Adrenal gland (tissue), 19 donors: ENCODE measurements at regions of chr5 and their contacts with region 1.

Region 1: GRCh38 chr5:41863871-41864486 is 6.2 kb downstream of the OXCT1 start:
- DNase-seq: no peak
- H3K4me3 ChIP-seq: no peak overlapping the region
- H3K27ac ChIP-seq: no peak overlapping the region
- H3K4me1 ChIP-seq: peaks cover 0 to 4% of the 10 kb centered on the region in 2 donors
- H3K27me3 ChIP-seq: no peaks in the 10 kb centered on the region
- CTCF ChIP-seq: no peak
- POLR2A ChIP-seq: no peak

Region 2: DNA sequence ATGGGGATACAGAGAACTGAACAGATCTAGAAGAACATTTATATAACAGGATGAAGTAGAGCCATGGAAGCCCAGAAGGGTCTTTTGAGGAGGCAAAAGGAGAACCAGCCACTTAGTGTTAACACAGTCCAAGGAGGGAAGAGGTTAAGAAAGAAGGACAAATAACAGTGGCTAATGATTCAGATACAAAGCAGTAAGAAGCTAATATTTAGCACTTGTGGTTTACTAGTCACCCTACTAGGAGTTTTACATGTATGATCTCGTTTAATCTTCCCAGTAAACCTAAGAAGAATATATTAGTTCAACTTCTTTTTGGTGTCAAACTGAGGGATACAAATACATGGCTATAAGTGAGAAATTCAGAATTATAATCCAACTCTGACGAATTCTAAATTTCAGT is 68.8 kb after region 1 on chr5:
- intact Hi-C with region 1: loop called in 1 of 2 experiments (anchors 5 kb)
- DNase-seq: no peak
- H3K4me3 ChIP-seq: no peak overlapping the region
- H3K27ac ChIP-seq: no peak overlapping the region
- H3K4me1 ChIP-seq: no peaks in the 10 kb centered on the region
- H3K27me3 ChIP-seq: no peaks in the 10 kb centered on the region
- CTCF ChIP-seq: no peak
- POLR2A ChIP-seq: no peak